ENCODE measurements at regions of chr11 and their contacts with region 1.

Region 1: DNA sequence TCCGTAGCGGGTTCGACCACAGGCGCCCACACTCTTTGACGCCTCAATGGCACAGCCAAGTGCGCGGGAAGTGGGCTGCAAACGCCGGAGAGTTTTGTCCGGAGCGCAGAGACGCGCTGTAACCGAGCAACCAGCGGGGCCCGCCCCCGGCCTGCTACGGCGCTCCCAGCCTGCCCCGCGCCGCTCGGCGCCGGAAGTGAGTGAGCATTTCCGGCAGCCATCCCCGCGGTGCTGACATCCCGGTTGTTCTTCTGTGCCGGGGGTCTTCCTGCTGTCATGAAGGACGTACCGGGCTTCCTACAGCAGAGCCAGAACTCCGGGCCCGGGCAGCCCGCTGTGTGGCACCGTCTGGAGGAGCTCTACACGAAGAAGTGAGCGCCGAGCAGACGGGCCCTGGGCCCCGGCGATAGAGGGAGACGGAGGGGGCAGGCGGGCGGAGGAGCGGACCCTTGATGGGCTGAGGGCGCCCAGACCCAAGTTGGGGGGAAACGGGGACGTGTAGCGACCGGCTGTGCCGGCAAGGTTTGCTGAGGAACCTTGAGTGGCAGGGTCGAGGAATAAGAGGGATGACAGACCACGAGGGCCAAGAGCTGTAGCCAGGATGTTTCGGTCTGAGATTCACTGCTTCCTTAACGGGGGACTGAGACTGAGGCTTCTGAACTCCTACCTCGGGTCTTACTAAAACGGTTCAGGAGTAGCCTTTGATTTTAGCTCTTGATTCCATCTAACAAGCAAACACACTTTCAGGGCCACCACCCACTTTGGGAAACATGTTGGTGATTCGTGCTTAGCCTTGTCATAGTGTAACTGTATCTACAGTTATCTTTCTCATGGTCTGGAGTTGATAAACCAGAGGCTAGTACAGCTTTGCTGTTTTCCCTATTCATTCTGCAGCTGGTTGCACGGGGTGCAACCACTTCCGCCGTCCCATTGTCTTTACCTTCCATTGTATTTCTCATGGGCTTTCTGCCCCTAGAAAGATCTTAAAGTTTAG is at the start of gene PSMD13:
- DNase-seq: peak; percentile 94
- ATAC-seq: peak; percentile 91
- total RNA-seq, gene PSMD13: 91.7 TPM

Region 2: DNA sequence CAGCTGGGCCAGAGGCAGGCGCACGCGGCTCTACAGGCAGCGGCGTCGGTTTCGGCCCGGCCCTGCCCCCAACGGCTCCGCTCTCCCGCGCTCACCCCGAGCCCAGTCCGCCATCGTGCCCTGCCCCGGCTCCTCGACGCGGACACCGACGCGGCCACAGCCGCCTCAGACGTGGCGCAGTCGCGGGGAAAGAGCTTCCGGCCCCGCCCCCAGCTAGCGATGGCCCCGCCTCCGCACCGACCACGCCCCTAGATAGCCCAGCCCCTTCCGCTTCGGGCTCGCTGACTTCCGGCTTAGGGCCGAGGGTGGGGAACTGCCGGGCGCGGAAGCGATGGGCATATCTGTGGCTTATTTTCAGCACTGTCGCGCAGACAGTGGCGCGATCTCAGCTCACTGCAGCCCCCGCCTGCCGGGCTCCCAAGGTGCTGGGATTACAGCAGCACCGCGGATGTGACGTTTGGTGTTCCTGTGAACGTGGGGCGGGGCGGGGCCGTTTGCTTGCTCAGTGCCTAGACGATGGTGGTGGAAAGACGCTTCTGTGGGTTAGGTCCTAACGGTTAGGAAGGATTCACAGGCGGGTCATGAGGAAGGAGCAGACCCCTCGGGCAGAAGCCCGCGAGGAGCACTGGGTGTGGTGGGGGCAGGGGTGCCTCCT is 29.7 kb before region 1 on chr11 and contains the starts of genes BET1L and RIC8A:
- intact Hi-C with region 1: loop called (anchors 1 kb)
- DNase-seq: peak; percentile 98
- ATAC-seq: peak; percentile 92
- total RNA-seq, gene BET1L: 19.4 TPM
- total RNA-seq, gene RIC8A: 52.3 TPM

Region 3: GRCh38 chr11:288328-289144 is 51.5 kb after region 1 on chr11 and contains the start of gene PGGHG:
- intact Hi-C with region 1: no loop called
- DNase-seq: peak; percentile 94
- ATAC-seq: peak; percentile 83
- total RNA-seq, gene PGGHG: 10.0 TPM